ENCODE measurements at regions of chr11 and their contacts with region 1.

Region 1: DNA sequence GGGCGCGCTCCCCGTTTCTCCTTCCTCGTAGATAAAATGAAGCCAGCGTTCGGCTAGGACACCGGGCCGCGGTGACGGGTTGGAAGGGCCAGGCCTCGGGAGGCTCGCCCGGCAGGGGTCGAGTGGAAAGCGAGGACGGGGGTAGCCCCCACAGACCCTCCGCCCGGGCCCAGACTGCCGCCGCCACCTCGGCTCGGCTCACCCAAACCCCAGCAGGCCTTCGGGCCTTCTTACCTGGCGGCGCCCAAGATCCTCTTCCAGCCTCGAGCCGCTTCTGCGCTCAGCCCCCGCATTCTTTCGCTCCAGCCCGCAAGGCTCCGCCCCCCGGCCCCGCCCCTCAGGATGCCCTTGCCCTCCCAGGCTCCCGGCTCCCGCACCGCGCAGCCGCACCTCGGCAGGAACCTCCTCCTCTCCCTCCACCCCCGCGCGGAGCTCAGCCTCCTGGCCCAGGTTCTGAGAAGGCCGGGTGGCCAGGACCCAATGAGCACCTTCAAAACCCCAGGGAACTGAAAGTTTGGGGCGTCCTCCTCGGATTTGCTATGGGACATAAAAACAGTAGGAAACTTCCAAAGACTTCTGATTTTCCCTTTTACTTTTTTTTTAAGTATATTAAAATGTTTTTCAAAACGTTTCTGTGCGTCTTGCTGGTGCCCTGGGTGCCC is at the start of gene CD59:
- DNase-seq: no peak
- ATAC-seq: peak; percentile 91
- H3K4me3 ChIP-seq: peak within 1 kb of the TSS; percentile 83 to 95
- H3K27ac ChIP-seq: peak within 1 kb of the TSS; percentile 85
- H3K4me1 ChIP-seq: peaks cover 41% of the 10 kb centered on the region
- H3K27me3 ChIP-seq: no peaks in the 10 kb centered on the region
- CTCF ChIP-seq: no peak
- total RNA-seq, gene CD59: 736 TPM

Region 2: DNA sequence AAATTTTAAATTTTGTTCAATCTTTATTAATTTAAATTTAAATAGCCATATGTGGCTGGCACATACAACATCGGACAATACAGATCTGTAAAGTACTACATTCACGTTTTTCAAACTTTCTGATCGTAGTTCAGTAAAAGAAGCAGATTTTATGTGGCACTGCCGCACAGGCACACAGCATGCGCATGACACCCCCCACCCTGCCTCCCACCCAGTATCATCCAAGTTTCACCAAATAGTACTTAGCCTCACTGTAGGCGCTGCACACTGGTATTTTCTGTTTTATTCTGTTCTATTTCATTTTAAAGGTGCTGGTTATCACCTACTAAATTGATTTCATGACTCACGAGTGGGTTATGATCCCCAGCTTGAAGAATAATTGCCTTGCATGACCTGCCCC is 319.2 kb before region 1 on chr11:
- CTCF ChIA-PET with region 1: no interaction called
- POLR2A ChIA-PET with region 1: interaction called, 10 read pairs
- in situ Hi-C with region 1: no loop called
- intact Hi-C with region 1: no loop called
- DNase-seq: no peak
- ATAC-seq: no peak
- H3K4me3 ChIP-seq: no peak overlapping the region
- H3K27ac ChIP-seq: no peak overlapping the region
- H3K4me1 ChIP-seq: no peaks in the 10 kb centered on the region
- H3K27me3 ChIP-seq: no peaks in the 10 kb centered on the region
- CTCF ChIP-seq: no peak

Region 3: GRCh38 chr11:33700425-33701271 is 35.6 kb before region 1 on chr11 and contains the start of gene C11orf91:
- CTCF ChIA-PET with region 1: no interaction called
- POLR2A ChIA-PET with region 1: interaction called, 13 read pairs
- in situ Hi-C with region 1: no loop called
- intact Hi-C with region 1: no loop called
- DNase-seq: peak; percentile 77
- ATAC-seq: peak; percentile 76
- H3K4me3 ChIP-seq: peak within 1 kb of the TSS; percentile 48 to 53
- H3K27ac ChIP-seq: peak within 1 kb of the TSS; percentile 94
- H3K4me1 ChIP-seq: peaks cover 91% of the 10 kb centered on the region
- H3K27me3 ChIP-seq: no peaks in the 10 kb centered on the region
- CTCF ChIP-seq: no peak
- total RNA-seq, gene C11orf91: 1.3 TPM

Region 4: GRCh38 chr11:33716236-33716635 is 20.0 kb before region 1 on chr11:
- CTCF ChIA-PET with region 1: interaction called, 5 read pairs
- POLR2A ChIA-PET with region 1: interaction called, 14 read pairs
- in situ Hi-C with region 1: no loop called
- intact Hi-C with region 1: no loop called
- DNase-seq: no peak
- ATAC-seq: peak; percentile 69
- H3K4me3 ChIP-seq: no peak overlapping the region
- H3K27ac ChIP-seq: peak overlapping the region; percentile 60; the same call in 1 of the 2 replicates
- H3K4me1 ChIP-seq: peaks cover 27% of the 10 kb centered on the region
- H3K27me3 ChIP-seq: no peaks in the 10 kb centered on the region
- CTCF ChIP-seq: peak; percentile 59; the same call in 1 of the 2 replicates

Region 5: DNA sequence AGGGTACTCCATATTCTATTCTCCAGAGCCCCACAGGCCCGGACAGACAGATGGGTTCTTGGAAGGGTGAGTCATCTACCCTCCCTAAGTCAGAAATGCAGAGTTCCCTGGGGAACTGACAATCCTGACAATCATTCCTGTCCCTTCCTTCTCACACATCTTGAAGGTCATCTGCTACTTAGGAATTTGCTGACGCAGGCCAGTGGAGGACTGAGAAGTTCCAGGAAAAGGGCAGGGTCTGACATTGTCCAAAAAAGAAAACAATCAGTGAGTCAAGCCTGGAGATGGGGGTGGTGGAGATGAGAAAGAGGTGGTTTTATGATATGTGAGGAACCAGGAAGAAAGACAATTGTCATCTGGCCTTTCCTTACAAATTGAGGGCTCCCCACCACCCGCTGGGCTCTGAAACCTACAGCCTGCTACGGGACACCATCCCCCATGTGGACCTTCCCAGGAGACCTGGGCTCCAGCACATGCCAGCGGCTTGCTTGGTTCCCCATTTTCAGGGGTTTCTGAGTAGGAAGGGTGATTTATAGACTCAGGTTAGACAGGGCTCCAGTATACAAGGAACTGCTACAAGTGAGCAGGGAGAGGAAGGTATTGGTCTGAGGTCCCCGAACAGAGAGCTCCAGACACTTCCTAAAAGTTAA is 12.9 kb before region 1 on chr11:
- CTCF ChIA-PET with region 1: no interaction called
- POLR2A ChIA-PET with region 1: interaction called, 12 read pairs
- in situ Hi-C with region 1: no loop called
- intact Hi-C with region 1: no loop called
- DNase-seq: no peak
- ATAC-seq: peak; percentile 49
- H3K4me3 ChIP-seq: peak overlapping the region in 1 of 2 experiments; percentile 5; a peak in 2 of 4 replicates
- H3K27ac ChIP-seq: peak overlapping the region; percentile 60
- H3K4me1 ChIP-seq: peaks cover 50% of the 10 kb centered on the region
- H3K27me3 ChIP-seq: no peaks in the 10 kb centered on the region
- CTCF ChIP-seq: no peak

Region 6: GRCh38 chr11:33751878-33752277 is 15.6 kb after region 1 on chr11:
- CTCF ChIA-PET with region 1: no interaction called
- POLR2A ChIA-PET with region 1: no interaction called
- in situ Hi-C with region 1: no loop called
- intact Hi-C with region 1: no loop called
- DNase-seq: no peak
- ATAC-seq: no peak
- H3K4me3 ChIP-seq: no peak overlapping the region
- H3K27ac ChIP-seq: no peak overlapping the region
- H3K4me1 ChIP-seq: no peaks in the 10 kb centered on the region; the same call in 1 of the 2 replicates
- H3K27me3 ChIP-seq: no peaks in the 10 kb centered on the region
- CTCF ChIP-seq: no peak